ENCODE measurements at regions of chr6 and their contacts with region 1.

Region 1: GRCh38 chr6:137094411-137095008 is 49.7 kb upstream of the IL20RA start:
- DNase-seq: peak; percentile 50 to 76 (median 64)
- ATAC-seq: peak; percentile 90
- H3K4me3 ChIP-seq: no peak overlapping the region
- H3K27ac ChIP-seq: no peak overlapping the region
- H3K4me1 ChIP-seq: no peaks in the 10 kb centered on the region
- H3K27me3 ChIP-seq: peaks cover 0 to 8% of the 10 kb centered on the region in 2 experiments; a peak in 1 of 5 replicates
- CTCF ChIP-seq: peak; percentile 68 to 91 (median 72)
- EP300 ChIP-seq: no peak
- POLR2A ChIP-seq: no peak
- RAD21 ChIP-seq: peak; percentile 97 to 98

Region 2: GRCh38 chr6:137112067-137112355 is 17.5 kb after region 1 on chr6:
- CTCF ChIA-PET with region 1: no interaction called
- POLR2A ChIA-PET with region 1: no interaction called
- in situ Hi-C with region 1: no loop called
- intact Hi-C with region 1: no loop called
- DNase-seq: no peak
- ATAC-seq: 0 out of 3 replicates have a peak, but pooled peaks have one; percentile 22
- H3K4me3 ChIP-seq: no peak overlapping the region
- H3K27ac ChIP-seq: no peak overlapping the region
- H3K4me1 ChIP-seq: no peaks in the 10 kb centered on the region
- H3K27me3 ChIP-seq: no peaks in the 10 kb centered on the region
- CTCF ChIP-seq: no peak
- EP300 ChIP-seq: no peak
- POLR2A ChIP-seq: no peak
- RAD21 ChIP-seq: no peak; a peak in 1 of 4 replicates

Region 3: GRCh38 chr6:137165375-137166246 is 71.1 kb after region 1 on chr6:
- CTCF ChIA-PET with region 1: interaction called, 6 read pairs
- POLR2A ChIA-PET with region 1: interaction called, 3 read pairs
- in situ Hi-C with region 1: loop called (anchors 5 kb)
- intact Hi-C with region 1: loop called (anchors 1 kb)
- DNase-seq: peak in 3 of 4 experiments; percentile 28 to 76 (median 45)
- ATAC-seq: peak; percentile 78
- H3K4me3 ChIP-seq: no peak overlapping the region
- H3K27ac ChIP-seq: no peak overlapping the region
- H3K4me1 ChIP-seq: peaks cover 0 to 34% of the 10 kb centered on the region in 2 experiments; a peak in 4 of 5 replicates
- H3K27me3 ChIP-seq: no peaks in the 10 kb centered on the region
- CTCF ChIP-seq: peak; percentile 71 to 75 (median 73)
- EP300 ChIP-seq: no peak
- POLR2A ChIP-seq: no peak
- RAD21 ChIP-seq: peak; percentile 82 to 88; a peak in 3 of 4 replicates

Region 4: GRCh38 chr6:137415127-137415833 is 320.8 kb after region 1 on chr6:
- CTCF ChIA-PET with region 1: no interaction called
- POLR2A ChIA-PET with region 1: no interaction called
- in situ Hi-C with region 1: no loop called
- intact Hi-C with region 1: loop called (anchors 5 kb)
- DNase-seq: peak in 3 of 4 experiments; percentile 16 to 52 (median 42)
- ATAC-seq: peak; percentile 98
- H3K4me3 ChIP-seq: no peak overlapping the region
- H3K27ac ChIP-seq: no peak overlapping the region
- H3K4me1 ChIP-seq: no peaks in the 10 kb centered on the region; a peak in 1 of 5 replicates
- H3K27me3 ChIP-seq: peaks cover 14 to 29% of the 10 kb centered on the region in 2 experiments; a peak in 4 of 5 replicates
- CTCF ChIP-seq: peak; percentile 59 to 77 (median 74)
- EP300 ChIP-seq: no peak
- POLR2A ChIP-seq: no peak
- RAD21 ChIP-seq: peak; percentile 57 to 70

Measured in K562 (cell line).